Endothelial cell of umbilical vein (primary cell): ENCODE measurements at regions of chr7 and their contacts with region 1.

Region 1: DNA sequence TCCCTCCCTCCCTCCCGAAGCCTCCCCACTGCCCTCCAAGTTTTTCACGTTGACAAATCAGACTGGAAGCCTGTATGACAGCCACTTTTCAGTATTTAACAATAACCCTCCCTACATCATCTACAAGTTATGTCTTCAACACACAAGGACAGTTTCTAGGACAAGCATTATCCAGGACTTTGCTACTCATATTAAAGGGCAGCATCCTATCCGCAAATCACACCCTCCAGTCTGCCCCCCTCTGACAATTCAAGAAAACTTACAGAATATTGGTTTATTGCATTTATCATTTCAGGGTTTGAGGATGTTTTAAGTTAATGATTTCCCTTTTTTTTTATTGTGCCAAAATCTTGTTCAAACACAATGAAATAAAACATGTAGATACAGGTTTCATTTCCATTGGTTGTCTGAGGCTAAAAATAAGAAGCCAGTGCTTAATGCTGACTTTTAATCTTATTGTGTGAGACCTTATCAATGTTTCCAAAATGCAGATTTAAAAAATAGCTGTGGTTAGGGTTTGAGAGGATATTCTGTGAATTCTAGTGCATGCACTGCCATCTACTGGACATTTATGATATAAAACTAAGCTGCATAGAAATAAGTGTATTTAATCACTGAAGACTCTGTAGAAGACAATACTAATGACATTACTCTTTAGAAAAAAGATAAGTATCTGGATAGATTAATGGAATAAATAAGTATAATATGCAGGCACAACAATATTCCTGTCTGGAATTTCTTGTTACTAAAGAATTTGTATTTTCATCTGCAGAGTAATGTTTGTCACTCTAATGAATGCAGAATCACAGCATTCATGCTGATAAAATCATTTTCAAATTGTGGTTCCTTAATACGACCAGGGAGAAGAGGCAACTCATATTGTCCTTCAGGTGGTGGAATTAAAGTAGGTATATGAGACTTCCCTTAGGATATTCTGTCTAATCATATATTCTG is 64.1 kb downstream of the CAV1 start:
- DNase-seq: peak; percentile 85
- H3K4me3 ChIP-seq: no peak overlapping the region
- H3K27ac ChIP-seq: peak overlapping the region; percentile 42
- H3K4me1 ChIP-seq: peaks cover 38% of the 10 kb centered on the region
- H3K27me3 ChIP-seq: no peaks in the 10 kb centered on the region
- CTCF ChIP-seq: peak; percentile 10 to 27
- POLR2A ChIP-seq: no peak

Region 2: GRCh38 chr7:116173051-116174028 is 415.6 kb before region 1 on chr7:
- CTCF ChIA-PET with region 1: interaction called, 144 read pairs
- POLR2A ChIA-PET with region 1: no interaction called
- dilution Hi-C with region 1: no loop called
- intact Hi-C with region 1: loop called (anchors 1 kb)
- DNase-seq: peak; percentile 84
- H3K4me3 ChIP-seq: no peak overlapping the region
- H3K27ac ChIP-seq: no peak overlapping the region
- H3K4me1 ChIP-seq: no peaks in the 10 kb centered on the region
- H3K27me3 ChIP-seq: peaks cover 0 to 3% of the 10 kb centered on the region in 2 experiments
- CTCF ChIP-seq: peak in 1 of 2 donors; percentile 20
- POLR2A ChIP-seq: no peak

Region 3: DNA sequence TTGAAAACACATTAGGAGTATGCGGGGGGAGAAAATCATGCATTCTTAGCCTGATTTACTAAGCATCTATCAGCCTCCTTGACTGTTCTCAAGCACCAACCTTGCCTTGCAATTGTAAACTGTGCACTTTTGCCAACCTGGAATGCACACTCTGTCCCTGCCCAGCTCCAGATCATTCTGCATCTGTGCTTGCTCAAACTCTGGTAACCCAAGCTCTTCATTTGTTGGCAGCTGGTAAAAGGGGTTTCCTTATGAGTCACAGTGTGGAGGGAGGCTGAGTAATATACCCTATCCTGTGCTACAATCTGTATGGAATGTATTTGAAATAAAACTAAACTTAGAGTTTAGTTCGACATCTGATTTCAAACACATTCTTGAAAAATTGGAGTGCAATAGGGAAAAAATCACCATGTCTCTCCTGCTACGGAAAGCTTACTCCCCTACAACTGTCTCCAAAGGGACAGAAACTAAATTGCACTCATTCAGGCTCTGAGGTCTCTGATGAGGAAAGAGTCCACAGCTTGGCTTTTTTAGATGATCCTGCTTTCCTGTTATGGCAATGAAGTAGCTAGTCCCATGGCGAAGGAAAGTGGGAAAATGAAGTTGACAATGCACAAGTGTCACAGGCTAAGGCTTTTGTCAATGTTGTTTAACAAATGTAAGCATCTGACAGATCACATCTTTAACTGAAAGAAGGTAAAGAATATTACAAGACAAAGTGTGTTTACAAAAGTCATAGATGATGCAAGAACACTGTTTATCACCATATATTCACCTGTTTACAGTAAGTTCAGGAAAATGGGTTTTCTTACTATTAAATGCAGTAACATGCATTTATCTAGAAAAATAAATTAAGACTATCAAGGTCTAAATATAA is 316.7 kb before region 1 on chr7:
- CTCF ChIA-PET with region 1: interaction called, 16 read pairs
- POLR2A ChIA-PET with region 1: no interaction called
- dilution Hi-C with region 1: no loop called
- intact Hi-C with region 1: no loop called
- DNase-seq: peak; percentile 94
- H3K4me3 ChIP-seq: peak overlapping the region in 1 of 3 experiments; percentile 48
- H3K27ac ChIP-seq: peak overlapping the region; percentile 90
- H3K4me1 ChIP-seq: peaks cover 57% of the 10 kb centered on the region
- H3K27me3 ChIP-seq: no peaks in the 10 kb centered on the region
- CTCF ChIP-seq: no peak
- POLR2A ChIP-seq: no peak

Region 4: DNA sequence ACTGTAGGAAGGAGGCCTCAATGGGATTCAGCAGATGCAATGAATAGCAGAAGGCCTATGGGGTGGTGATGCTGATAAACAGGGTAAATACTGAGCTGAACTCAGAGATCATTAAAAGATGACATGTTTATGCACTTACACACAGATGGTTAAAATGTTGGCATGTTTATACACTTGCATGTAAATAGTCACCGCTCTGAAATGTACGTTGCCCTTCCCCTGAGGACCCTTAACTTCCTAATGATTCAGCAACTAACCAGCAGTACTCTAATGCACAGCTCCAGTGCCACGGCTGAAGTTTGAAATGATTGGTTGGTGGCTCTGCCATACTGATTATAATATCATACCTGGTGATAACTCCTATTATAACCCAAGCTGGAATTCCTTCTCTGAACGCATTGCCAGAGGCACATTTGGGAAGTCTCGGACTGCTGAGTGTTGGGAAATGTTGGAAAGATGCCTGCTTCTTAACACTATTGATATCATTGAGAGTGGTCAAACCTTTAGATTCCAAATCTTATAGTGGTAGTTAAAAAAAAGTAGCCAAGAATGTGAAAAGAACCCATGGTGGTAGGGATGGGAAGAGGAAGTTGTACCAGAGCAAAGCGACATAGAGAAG is 67.8 kb before region 1 on chr7:
- CTCF ChIA-PET with region 1: interaction called, 64 read pairs
- POLR2A ChIA-PET with region 1: interaction called, 3 read pairs
- dilution Hi-C with region 1: no loop called
- intact Hi-C with region 1: no loop called
- DNase-seq: peak; percentile 56
- H3K4me3 ChIP-seq: no peak overlapping the region
- H3K27ac ChIP-seq: peak overlapping the region; percentile 97
- H3K4me1 ChIP-seq: peaks cover 39% of the 10 kb centered on the region
- H3K27me3 ChIP-seq: no peaks in the 10 kb centered on the region
- CTCF ChIP-seq: no peak
- POLR2A ChIP-seq: no peak

Region 5: GRCh38 chr7:116571037-116571436 is 17.9 kb before region 1 on chr7:
- CTCF ChIA-PET with region 1: interaction called, 21 read pairs
- POLR2A ChIA-PET with region 1: no interaction called
- dilution Hi-C with region 1: no loop called
- intact Hi-C with region 1: no loop called
- DNase-seq: peak; percentile 92
- H3K4me3 ChIP-seq: no peak overlapping the region
- H3K27ac ChIP-seq: peak overlapping the region; percentile 49
- H3K4me1 ChIP-seq: peaks cover 48% of the 10 kb centered on the region
- H3K27me3 ChIP-seq: no peaks in the 10 kb centered on the region
- CTCF ChIP-seq: no peak
- POLR2A ChIP-seq: no peak

Region 6: GRCh38 chr7:116715077-116715476 is 126.2 kb after region 1 on chr7:
- CTCF ChIA-PET with region 1: interaction called, 13 read pairs
- POLR2A ChIA-PET with region 1: no interaction called
- dilution Hi-C with region 1: no loop called
- intact Hi-C with region 1: no loop called
- DNase-seq: no peak
- H3K4me3 ChIP-seq: no peak overlapping the region
- H3K27ac ChIP-seq: no peak overlapping the region
- H3K4me1 ChIP-seq: peaks cover 12% of the 10 kb centered on the region
- H3K27me3 ChIP-seq: no peaks in the 10 kb centered on the region
- CTCF ChIP-seq: peak in 1 of 2 donors; percentile 5
- POLR2A ChIP-seq: no peak

Region 7: DNA sequence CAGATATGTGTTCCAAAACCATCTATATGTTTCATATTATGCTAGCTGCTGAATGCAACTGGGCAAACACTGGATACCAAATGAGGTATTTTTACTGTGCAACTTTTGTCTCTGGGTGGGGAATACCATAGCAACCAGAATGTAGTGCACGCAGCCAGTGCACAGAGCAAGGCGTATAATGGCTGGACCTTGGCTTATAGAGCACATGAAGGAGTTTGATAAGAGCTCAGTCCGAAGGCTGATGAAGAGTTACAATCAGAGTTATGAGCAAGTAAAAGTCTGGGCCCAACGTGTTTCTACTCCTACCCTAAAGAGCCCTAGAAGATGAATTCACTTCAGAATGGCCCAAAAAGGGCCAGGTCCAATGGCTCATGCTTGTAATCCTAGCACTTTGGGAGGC is 165.3 kb after region 1 on chr7:
- CTCF ChIA-PET with region 1: no interaction called
- POLR2A ChIA-PET with region 1: no interaction called
- dilution Hi-C with region 1: no loop called
- intact Hi-C with region 1: no loop called
- DNase-seq: no peak
- H3K4me3 ChIP-seq: no peak overlapping the region
- H3K27ac ChIP-seq: no peak overlapping the region
- H3K4me1 ChIP-seq: peaks cover 25% of the 10 kb centered on the region
- H3K27me3 ChIP-seq: no peaks in the 10 kb centered on the region
- CTCF ChIP-seq: no peak
- POLR2A ChIP-seq: no peak

Region 8: DNA sequence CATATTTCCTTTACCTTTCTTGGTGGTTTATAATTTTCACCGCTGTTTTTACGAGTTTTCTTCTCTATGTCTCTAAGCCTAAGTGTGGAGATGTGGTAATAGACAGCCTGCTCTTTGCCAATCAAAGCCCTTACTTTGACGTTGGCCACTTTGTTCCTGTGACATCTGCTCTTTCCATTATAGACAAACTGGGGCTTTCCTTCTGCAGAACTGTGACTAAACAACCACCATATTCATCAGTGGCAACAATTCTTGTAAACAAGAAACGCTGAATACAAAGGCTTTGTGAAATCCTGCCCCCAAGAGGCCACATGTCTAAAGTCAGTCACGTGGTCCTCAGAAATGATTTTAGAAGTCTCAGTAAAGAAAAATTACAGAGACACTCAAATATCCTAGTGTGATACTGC is 213.8 kb after region 1 on chr7:
- CTCF ChIA-PET with region 1: interaction called, 137 read pairs
- POLR2A ChIA-PET with region 1: no interaction called
- dilution Hi-C with region 1: no loop called
- intact Hi-C with region 1: loop called (anchors 1 kb)
- DNase-seq: peak; percentile 75
- H3K4me3 ChIP-seq: no peak overlapping the region
- H3K27ac ChIP-seq: no peak overlapping the region
- H3K4me1 ChIP-seq: peaks cover 14% of the 10 kb centered on the region
- H3K27me3 ChIP-seq: no peaks in the 10 kb centered on the region
- CTCF ChIP-seq: peak; percentile 40 to 46
- POLR2A ChIP-seq: no peak